AG04449 (cell line): ENCODE measurements at regions of chr13 and their contacts with region 1.

Region 1: DNA sequence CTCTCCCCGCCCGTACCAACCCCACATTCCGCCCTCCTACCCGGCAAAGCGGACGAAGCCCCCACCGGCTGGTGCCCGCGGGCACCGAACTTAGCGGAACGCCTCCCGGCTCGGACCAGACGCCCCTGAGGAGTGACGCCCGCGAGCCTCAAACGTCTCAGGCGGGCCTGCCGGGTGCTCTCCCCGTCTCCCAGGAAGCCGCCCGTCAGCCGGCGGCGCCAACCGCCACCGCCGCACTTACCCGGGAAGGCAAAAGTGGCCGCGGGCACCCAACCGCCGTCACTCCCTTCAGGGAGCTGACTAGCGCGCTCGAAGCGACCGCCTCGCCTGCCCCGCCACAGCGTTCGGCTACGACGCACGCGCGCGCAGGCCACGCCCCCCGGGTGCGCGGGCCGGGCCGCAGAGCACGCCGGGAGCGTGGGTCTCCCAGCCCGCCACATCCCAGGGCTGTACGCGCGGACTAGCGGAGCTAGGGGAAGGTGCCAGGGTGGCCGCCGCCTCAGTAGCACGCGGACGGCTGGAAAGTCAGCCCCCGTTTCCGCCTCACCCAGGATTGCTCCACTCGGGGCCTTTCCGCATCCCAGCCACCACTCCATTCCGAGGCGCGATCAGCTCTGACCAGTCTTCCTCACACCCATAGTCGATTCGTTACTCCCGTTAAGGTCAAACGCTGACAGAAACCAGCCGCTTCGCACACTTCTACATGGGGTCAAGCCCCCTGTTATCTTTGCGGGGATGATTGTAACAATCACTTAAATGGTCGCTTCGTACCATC is at the start of gene TEX30:
- DNase-seq: no peak
- H3K4me3 ChIP-seq: peak within 1 kb of the TSS; percentile 84
- CTCF ChIP-seq: no peak

Region 2: DNA sequence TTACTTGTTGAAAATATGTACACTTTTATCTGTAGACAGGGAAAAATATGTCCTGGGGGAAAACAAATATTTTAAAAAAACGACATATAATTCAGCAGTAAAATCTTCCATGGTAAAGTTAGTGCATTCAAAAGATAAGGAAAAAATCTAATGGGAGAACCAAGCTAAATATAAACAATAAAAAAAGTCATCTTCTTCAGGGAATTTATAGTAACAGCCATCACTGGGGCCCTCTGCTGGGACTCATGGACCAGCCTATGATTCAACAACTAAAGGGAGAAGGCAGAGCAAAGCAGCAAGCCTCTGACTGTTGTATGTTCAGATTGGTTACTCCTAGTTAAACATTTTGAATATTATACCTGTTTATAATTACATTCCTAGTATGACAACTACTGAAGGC is 1228.1 kb before region 1 on chr13:
- CTCF ChIA-PET with region 1: no interaction called
- POLR2A ChIA-PET with region 1: no interaction called
- DNase-seq: no peak
- H3K4me3 ChIP-seq: no peak overlapping the region
- CTCF ChIP-seq: no peak

Region 3: DNA sequence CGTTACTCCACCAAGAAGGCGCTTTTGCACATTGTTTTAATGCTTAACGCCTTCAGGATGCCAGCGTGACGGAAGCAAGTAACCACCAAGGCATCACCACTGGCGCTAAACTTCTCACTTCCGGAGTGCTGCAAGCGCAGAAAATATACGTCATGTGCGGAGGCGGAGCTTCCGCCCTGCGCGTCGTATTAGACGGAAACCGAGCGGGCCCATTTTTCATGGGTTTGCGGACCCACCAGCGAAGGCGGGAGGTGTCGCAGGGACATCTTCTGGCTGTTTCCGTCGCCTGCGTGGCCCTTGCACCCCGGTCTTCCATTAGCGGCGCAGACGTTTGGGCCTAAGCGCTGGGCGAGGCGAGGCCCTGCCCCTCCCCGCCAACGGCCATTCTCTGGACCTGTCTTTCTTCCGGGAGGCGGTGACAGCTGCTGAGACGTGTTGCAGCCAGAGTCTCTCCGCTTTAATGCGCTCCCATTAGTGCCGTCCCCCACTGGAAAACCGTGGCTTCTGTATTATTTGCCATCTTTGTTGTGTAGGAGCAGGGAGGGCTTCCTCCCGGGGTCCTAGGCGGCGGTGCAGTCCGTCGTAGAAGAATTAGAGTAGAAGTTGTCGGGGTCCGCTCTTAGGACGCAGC is 72.1 kb after region 1 on chr13 and contains the start of gene ERCC5:
- CTCF ChIA-PET with region 1: interaction called, 3 read pairs
- POLR2A ChIA-PET with region 1: interaction called, 12 read pairs
- DNase-seq: peak; percentile 74
- H3K4me3 ChIP-seq: peak within 1 kb of the TSS; percentile 95
- CTCF ChIP-seq: no peak

Region 4: GRCh38 chr13:103451656-103452055 is 678.0 kb after region 1 on chr13:
- CTCF ChIA-PET with region 1: no interaction called
- POLR2A ChIA-PET with region 1: no interaction called
- DNase-seq: no peak
- H3K4me3 ChIP-seq: no peak overlapping the region
- CTCF ChIP-seq: no peak